ENCODE measurements at regions of chr2 and their contacts with region 1.

Region 1: DNA sequence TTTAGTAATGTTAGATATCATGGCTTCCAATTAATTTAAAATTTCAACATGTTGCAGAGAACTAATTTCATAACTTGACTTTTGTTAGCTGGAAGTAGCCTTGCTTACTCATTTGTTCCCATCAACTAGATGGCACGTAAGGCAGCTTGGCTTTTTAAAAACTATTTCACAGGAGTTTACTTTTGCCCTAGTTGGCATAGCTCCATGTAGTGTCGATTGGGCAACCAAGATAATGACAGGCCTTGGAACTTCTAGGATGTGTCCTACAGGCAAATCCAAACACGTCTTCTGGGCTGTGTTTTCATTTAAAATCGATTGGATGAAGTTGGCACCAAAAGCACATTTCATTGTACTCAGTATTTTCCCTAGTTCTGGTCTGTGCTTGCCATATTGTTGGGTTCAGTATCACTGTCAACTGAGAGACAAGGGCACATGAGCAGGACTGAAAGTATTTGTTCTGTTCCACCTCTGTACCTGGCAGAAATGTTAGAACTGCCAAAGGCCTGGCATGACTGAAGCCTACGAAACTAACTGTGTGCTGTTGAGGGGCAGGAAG is 29.4 kb downstream of the HADHB start:
- DNase-seq: no peak
- ATAC-seq: peak; percentile 89

Region 2: DNA sequence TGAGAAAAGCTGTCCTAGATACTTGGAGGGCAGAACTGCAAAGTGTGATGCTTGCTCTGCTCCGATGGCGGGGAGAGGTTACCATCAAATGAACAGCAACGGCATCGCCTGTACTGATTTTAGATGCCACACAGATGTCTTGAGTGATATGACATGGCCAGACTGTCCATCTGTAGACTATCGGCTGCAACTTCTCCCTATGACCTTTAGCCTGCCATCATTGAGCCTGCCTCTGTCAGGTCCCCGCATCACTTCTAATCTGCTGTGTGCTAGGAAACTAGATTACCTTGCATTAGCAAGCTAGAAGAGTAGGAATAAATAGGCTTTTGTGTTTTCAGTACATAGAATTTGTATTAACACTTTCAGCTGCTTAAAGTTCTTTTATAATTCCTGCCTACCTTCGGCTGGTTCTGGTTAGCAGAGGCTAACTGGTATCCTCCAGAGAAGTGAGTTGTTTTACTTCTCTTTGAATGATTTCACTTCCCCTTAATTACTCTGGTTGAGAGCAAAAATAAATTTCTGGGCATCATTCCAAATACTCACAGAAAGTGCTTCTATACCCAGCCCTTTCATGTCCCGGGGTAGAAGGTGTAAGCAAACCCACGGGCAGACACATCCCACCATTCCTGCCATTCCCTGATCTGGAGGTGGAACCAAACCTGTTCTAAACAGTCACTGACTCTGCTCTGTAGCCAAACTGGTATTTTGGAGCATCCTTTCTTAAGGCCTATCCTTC is 77.3 kb before region 1 on chr2:
- intact Hi-C with region 1: no loop called
- DNase-seq: no peak
- ATAC-seq: no peak

Region 3: DNA sequence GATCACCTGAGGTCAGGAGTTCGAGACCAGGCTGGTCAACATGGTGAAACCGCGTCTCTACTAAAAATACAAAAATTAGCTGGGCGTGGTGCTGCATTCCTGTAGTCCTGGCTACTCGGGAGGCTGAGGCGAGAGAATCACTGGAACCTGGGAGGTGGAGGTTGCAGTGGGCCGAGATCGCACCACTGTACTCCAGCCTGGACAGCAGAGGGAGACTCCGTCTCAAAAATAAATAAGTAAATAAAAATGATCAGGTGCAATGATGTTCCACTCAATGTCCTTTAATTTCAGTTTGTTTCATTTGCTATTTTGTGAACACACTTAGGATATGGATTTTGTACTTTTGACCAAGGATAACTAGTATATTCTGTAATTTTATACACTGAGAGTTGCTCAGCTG is 39.1 kb before region 1 on chr2:
- intact Hi-C with region 1: loop called (anchors 2 kb)
- DNase-seq: no peak
- ATAC-seq: no peak

Region 4: DNA sequence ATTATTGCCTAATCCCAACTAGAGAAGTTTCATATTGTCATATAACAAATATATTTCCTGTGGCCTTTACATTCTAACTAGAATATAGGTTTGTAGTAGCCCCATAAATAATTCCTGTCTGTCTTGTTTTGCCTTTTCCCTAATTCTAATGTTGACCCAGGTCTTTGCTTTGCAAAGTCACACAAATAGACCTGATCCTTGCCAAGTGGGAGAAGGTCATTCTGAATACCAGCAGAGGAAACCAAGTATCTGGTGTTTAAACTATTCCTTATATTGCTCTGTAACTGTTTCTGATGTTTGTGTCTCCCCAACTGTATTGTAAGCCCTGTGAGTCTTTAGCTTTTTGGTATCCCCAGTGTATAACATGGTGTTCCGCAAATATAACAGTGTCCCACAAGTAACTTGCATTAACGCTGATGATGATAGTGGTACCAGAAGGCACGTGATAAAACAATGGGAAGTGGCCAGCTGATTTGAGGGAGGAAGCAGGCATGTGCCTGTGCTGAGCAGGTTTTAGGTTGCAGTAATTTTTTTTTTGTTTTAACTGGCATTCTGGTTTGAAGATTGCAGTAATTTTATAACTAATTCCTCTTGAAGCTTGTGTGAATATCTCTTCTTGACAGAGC is 18.3 kb before region 1 on chr2:
- intact Hi-C with region 1: loop called (anchors 2 kb)
- DNase-seq: no peak
- ATAC-seq: peak; percentile 71